ENCODE measurements at regions of chr10 and their contacts with region 1.

Region 1: DNA sequence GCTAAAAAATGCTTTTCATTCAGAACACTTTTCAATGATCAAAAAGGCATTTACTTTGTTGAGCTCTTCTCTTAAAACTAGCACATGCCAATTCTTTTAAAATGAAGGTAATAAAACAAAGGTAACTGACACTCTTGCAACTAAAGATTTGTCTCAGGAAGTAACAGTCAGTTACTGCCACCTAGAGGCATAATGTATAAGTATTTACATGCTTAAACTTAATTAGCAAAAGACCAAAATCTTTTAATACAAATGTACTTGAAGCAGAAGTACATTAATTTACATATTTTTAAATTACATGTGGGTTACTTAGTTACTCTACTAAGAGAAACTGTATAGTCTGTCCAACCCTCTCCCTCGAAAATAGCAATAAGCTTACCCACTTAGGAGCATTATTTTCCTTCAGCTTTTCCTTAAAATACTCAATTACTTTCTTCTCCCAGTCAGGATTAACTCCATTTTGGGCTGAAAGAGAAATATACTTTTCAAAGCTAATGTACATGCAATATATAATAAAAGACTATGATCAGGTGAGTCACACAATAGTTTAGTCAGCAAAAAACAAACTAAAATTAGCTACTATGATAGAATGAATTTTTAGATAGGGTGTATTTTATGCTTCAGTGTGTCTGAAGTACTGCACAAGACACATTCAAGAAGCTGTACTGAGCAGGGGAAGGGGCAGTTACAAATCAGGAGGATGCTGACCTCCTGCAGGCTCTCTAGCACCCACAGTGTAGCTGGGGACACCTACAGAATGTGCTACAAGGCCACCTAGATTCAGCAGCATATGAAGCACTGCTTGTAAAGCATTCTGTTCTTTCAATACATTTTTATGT is 13.0 kb downstream of the MCMBP start:
- DNase-seq: peak; percentile 63
- H3K4me3 Mint-ChIP-seq: no peak overlapping the region
- H3K27ac Mint-ChIP-seq: peak overlapping the region; percentile 35
- H3K4me1 Mint-ChIP-seq: peaks cover 23% of the 10 kb centered on the region
- H3K27me3 Mint-ChIP-seq: no peaks in the 10 kb centered on the region
- CTCF ChIP-seq: peak; percentile 38

Region 2: DNA sequence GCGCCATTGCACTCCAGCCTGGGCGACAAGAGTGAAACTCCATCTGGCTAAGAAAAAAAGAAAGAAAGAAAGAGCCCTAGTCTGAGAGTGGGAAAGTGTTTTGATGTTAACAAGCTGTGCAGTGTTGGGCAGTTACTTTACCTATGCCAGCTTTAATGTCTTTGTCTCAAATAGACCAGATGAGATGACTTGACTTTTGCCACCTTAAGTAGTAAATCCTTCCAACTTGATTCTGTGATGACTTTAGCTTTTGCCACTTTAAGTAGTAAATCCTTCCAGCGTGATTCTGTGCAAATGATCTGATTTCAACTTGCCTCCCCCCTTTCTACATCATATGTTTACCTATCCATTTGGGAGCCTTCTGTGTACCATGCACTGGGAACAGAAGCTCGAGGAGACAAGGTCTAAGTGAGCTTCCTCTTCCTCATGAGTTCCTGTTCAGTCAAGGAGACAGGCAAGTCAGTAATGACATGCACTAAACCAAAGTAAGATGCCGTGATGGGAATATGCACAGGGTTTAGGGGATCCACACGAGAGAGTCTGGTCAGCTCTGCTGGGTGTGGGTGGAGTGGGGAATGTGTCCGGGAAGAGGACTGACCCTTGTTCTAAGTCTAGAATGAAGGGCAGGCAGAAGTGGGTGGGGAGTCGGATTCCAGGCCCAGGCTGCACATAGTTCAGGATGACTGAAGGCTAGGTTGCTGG is 116.5 kb before region 1 on chr10:
- CTCF ChIA-PET with region 1: interaction called, 88 read pairs
- POLR2A ChIA-PET with region 1: interaction called, 9 read pairs
- intact Hi-C with region 1: no loop called
- DNase-seq: no peak
- H3K4me3 Mint-ChIP-seq: no peak overlapping the region
- H3K27ac Mint-ChIP-seq: peak overlapping the region; percentile 31
- H3K4me1 Mint-ChIP-seq: peaks cover 13% of the 10 kb centered on the region
- H3K27me3 Mint-ChIP-seq: no peaks in the 10 kb centered on the region
- CTCF ChIP-seq: no peak

Region 3: DNA sequence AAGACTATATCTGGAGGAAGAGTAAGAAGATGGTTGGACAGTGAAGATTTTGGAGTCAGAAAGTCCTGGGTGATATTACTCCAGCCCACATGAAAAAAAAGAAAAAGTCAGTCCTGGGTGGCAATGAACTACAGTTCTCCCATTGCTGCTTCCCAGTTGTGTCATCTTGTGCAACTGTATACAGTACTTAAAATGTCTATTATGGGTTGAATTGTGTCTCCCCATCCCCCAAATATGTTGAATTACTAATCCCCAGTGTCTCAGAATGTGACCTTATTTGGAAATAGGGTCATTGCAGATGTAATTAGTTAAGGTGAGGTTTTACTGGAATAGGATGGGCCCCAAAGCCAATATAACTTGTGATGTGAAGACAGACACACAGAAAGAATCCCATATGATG is 48.5 kb after region 1 on chr10:
- CTCF ChIA-PET with region 1: no interaction called
- POLR2A ChIA-PET with region 1: no interaction called
- intact Hi-C with region 1: no loop called
- DNase-seq: no peak
- H3K4me3 Mint-ChIP-seq: no peak overlapping the region
- H3K27ac Mint-ChIP-seq: peak overlapping the region; percentile 22
- H3K4me1 Mint-ChIP-seq: no peaks in the 10 kb centered on the region
- H3K27me3 Mint-ChIP-seq: no peaks in the 10 kb centered on the region
- CTCF ChIP-seq: no peak

Region 4: DNA sequence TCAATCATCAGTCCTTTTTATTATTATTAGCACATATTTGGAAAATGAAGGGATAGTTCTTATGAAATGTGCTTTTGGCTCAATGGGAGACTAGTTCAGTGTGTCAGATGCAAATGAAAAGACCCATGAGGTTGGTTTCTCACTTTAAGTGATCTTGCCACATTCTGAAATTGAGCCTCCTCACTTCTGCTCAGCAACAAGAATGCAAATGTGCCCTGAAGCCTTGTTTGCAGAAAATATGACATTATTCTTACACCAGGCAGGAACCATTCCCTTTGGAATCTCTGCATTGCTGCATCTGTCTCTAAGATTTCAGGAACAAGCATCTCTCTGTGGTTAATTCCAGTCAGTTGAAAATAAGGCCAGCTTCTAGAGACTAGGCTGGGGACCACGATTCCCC is 411.3 kb after region 1 on chr10:
- CTCF ChIA-PET with region 1: no interaction called
- POLR2A ChIA-PET with region 1: no interaction called
- intact Hi-C with region 1: no loop called
- DNase-seq: no peak
- H3K4me3 Mint-ChIP-seq: no peak overlapping the region
- H3K27ac Mint-ChIP-seq: no peak overlapping the region
- H3K4me1 Mint-ChIP-seq: no peaks in the 10 kb centered on the region
- H3K27me3 Mint-ChIP-seq: peaks cover 9% of the 10 kb centered on the region
- CTCF ChIP-seq: no peak

Measured in MCF 10A (cell line).